HepG2 (cell line): ENCODE measurements at regions of chr15 and their contacts with region 1.

Region 1: GRCh38 chr15:99282121-99282520 is 30.8 kb downstream of the LRRC28 start:
- DNase-seq: no peak
- ATAC-seq: no peak
- H3K4me3 ChIP-seq: no peak overlapping the region
- H3K27ac ChIP-seq: no peak overlapping the region
- H3K4me1 ChIP-seq: peaks cover 7% of the 10 kb centered on the region; the same call in 1 of the 2 replicates
- H3K27me3 ChIP-seq: no peaks in the 10 kb centered on the region
- CTCF ChIP-seq: no peak
- EP300 ChIP-seq: no peak
- POLR2A ChIP-seq: no peak
- RAD21 ChIP-seq: no peak

Region 2: GRCh38 chr15:99343881-99344551 is 61.9 kb after region 1 on chr15:
- CTCF ChIA-PET with region 1: no interaction called
- POLR2A ChIA-PET with region 1: no interaction called
- in situ Hi-C with region 1: no loop called
- intact Hi-C with region 1: loop called (anchors 5 kb)
- DNase-seq: no peak
- ATAC-seq: peak; percentile 63
- H3K4me3 ChIP-seq: no peak overlapping the region
- H3K27ac ChIP-seq: peak overlapping the region; percentile 15
- H3K4me1 ChIP-seq: peaks cover 48% of the 10 kb centered on the region
- H3K27me3 ChIP-seq: no peaks in the 10 kb centered on the region
- CTCF ChIP-seq: peak; percentile 61
- EP300 ChIP-seq: no peak
- POLR2A ChIP-seq: no peak
- RAD21 ChIP-seq: no peak

Region 3: GRCh38 chr15:99390660-99391059 is 108.5 kb after region 1 on chr15:
- CTCF ChIA-PET with region 1: no interaction called
- POLR2A ChIA-PET with region 1: no interaction called
- in situ Hi-C with region 1: no loop called
- intact Hi-C with region 1: loop called (anchors 5 kb)
- DNase-seq: peak; percentile 27
- ATAC-seq: peak; percentile 72
- H3K4me3 ChIP-seq: no peak overlapping the region
- H3K27ac ChIP-seq: no peak overlapping the region
- H3K4me1 ChIP-seq: peaks cover 15% of the 10 kb centered on the region
- H3K27me3 ChIP-seq: no peaks in the 10 kb centered on the region
- CTCF ChIP-seq: peak; percentile 45
- EP300 ChIP-seq: no peak
- POLR2A ChIP-seq: no peak
- RAD21 ChIP-seq: no peak

Region 4: GRCh38 chr15:99507504-99508310 is 225.6 kb after region 1 on chr15:
- CTCF ChIA-PET with region 1: no interaction called
- POLR2A ChIA-PET with region 1: no interaction called
- in situ Hi-C with region 1: no loop called
- intact Hi-C with region 1: loop called (anchors 1 kb)
- DNase-seq: peak; percentile 21
- ATAC-seq: peak; percentile 84
- H3K4me3 ChIP-seq: peak overlapping the region; percentile 6 to 50 (median 23); a peak in 3 of 6 replicates
- H3K27ac ChIP-seq: no peak overlapping the region
- H3K4me1 ChIP-seq: peaks cover 42% of the 10 kb centered on the region
- H3K27me3 ChIP-seq: peaks cover 2 to 13% of the 10 kb centered on the region in 2 experiments; a peak in 2 of 5 replicates
- CTCF ChIP-seq: no peak
- EP300 ChIP-seq: no peak
- POLR2A ChIP-seq: no peak
- RAD21 ChIP-seq: no peak

Region 5: GRCh38 chr15:99755692-99756409 is 473.7 kb after region 1 on chr15:
- CTCF ChIA-PET with region 1: interaction called, 5 read pairs
- POLR2A ChIA-PET with region 1: no interaction called
- in situ Hi-C with region 1: no loop called
- intact Hi-C with region 1: loop called (anchors 5 kb)
- DNase-seq: peak; percentile 74
- ATAC-seq: peak; percentile 91
- H3K4me3 ChIP-seq: no peak overlapping the region
- H3K27ac ChIP-seq: no peak overlapping the region
- H3K4me1 ChIP-seq: peaks cover 26% of the 10 kb centered on the region
- H3K27me3 ChIP-seq: peaks cover 0 to 3% of the 10 kb centered on the region in 2 experiments; a peak in 1 of 5 replicates
- CTCF ChIP-seq: peak; percentile 88
- EP300 ChIP-seq: no peak
- POLR2A ChIP-seq: no peak
- RAD21 ChIP-seq: peak; percentile 67; the same call in 1 of the 2 replicates